Right cardiac atrium (tissue), 5 donors: ENCODE measurements at regions of chr17 and their contacts with region 1.

Region 1: DNA sequence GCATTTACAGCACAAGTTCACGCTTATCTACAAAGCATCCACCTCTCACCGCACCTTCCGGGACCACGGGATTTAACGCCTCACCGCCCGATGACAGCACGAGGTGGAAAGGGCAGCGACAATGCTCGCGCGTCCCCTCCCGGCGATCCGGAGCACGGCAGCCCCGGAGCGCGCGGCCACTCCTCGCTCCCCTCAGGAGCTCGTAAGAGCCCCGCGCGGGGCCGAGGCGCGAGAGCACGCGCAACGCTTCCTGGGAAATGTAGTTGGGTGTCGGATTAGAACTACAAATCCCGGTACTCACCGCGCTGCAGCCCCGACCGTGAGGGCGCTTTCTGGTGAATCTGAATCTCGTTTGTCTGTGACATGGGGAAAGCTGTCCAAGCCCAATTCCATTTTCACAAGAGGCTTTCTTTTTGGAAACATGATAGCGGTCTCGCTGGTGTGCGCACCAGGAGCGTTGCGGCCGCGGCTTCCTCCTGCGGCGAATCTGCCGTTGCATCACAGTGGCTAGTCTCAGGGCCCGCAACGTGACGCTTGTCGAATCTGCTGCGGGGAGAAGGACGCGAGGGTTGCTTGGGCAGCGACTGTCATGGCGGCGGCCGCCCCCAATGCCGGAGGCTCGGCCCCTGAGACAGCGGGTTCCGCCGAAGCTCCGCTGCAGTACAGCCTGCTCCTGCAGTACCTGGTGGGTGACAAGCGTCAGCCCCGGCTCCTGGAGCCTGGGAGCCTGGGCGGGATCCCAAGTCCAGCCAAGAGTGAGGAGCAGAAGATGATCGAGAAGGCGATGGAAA is at the start of gene TIMM22:
- DNase-seq: peak; percentile 94 to 97 (median 96)
- ATAC-seq: peak; percentile 97
- H3K4me3 ChIP-seq: peak within 1 kb of the TSS; percentile 97
- H3K27ac ChIP-seq: peak within 1 kb of the TSS; percentile 89
- H3K4me1 ChIP-seq: peaks cover 8% of the 10 kb centered on the region
- H3K27me3 ChIP-seq: no peaks in the 10 kb centered on the region
- total RNA-seq, gene TIMM22: 13.9 to 16.1 (median 14.4) TPM

Region 2: GRCh38 chr17:534071-534691 is 462.6 kb before region 1 on chr17:
- intact Hi-C with region 1: no loop called
- DNase-seq: peak in 2 of 3 donors; percentile 73 to 74
- ATAC-seq: peak; percentile 34 to 69
- H3K4me3 ChIP-seq: no peak overlapping the region
- H3K27ac ChIP-seq: peak overlapping the region; percentile 32
- H3K4me1 ChIP-seq: no peaks in the 10 kb centered on the region
- H3K27me3 ChIP-seq: no peaks in the 10 kb centered on the region

Region 3: DNA sequence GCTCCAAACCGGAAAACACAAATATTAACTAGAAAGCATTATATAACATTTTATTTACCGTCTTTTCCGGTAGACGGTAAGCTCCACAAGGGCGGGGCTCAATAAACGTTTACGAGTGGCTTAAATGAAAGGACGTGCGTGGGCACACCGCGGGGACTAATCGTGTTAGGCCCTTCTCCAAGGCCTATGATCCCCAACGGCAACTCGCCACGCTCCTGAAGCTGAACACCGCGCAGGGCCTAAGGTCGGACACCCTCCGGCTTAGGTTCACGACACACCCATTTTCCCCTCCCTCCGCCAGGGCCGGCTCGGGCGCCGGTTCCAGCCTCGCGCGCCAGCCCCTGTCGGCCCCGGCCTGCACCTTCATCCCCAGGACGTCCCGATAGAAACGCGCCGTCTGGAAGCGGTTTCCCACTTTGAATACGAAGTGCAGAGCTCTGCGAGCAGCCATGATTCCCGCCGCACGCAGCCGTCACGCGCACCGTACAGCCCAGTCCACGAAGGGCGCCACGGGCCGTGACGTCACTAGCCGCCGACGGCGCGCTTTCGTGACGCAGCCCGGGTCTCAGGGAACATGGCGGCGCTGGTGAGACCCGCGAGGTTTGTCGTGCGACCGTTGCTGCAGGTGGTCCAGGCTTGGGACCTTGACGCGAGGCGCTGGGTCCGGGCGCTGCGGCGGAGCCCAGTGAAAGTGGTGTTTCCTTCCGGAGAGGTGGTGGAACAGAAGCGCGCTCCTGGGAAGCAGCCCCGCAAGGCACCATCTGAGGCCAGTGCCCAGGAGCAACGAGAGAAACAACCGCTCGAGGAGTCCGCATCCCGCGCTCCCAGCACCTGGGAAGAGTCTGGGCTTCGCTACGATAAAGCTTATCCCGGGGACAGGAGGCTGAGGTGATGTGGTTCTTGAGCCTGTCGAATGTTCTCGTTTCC is 214.7 kb before region 1 on chr17 and contains the starts of genes GLOD4 and MRM3:
- intact Hi-C with region 1: loop called in 1 of 4 experiments (anchors 5 kb)
- DNase-seq: peak; percentile 91 to 99 (median 97)
- ATAC-seq: peak; percentile 98
- H3K4me3 ChIP-seq: peak within 1 kb of the TSS; percentile 62
- H3K27ac ChIP-seq: peak within 1 kb of the TSS; percentile 61
- H3K4me1 ChIP-seq: peaks cover 4% of the 10 kb centered on the region
- H3K27me3 ChIP-seq: no peaks in the 10 kb centered on the region
- total RNA-seq, gene GLOD4: 32.4 to 42.9 (median 36.1) TPM
- total RNA-seq, gene MRM3: 15.6 to 19.2 (median 17.9) TPM

Region 4: GRCh38 chr17:1047177-1047878 is 50.6 kb after region 1 on chr17:
- intact Hi-C with region 1: loop called in 2 of 4 experiments (anchors 5 to 10 kb)
- DNase-seq: peak; percentile 71 to 89 (median 84)
- ATAC-seq: peak; percentile 61 to 75
- H3K4me3 ChIP-seq: no peak overlapping the region
- H3K27ac ChIP-seq: peak overlapping the region; percentile 90
- H3K4me1 ChIP-seq: no peaks in the 10 kb centered on the region
- H3K27me3 ChIP-seq: no peaks in the 10 kb centered on the region

Region 5: DNA sequence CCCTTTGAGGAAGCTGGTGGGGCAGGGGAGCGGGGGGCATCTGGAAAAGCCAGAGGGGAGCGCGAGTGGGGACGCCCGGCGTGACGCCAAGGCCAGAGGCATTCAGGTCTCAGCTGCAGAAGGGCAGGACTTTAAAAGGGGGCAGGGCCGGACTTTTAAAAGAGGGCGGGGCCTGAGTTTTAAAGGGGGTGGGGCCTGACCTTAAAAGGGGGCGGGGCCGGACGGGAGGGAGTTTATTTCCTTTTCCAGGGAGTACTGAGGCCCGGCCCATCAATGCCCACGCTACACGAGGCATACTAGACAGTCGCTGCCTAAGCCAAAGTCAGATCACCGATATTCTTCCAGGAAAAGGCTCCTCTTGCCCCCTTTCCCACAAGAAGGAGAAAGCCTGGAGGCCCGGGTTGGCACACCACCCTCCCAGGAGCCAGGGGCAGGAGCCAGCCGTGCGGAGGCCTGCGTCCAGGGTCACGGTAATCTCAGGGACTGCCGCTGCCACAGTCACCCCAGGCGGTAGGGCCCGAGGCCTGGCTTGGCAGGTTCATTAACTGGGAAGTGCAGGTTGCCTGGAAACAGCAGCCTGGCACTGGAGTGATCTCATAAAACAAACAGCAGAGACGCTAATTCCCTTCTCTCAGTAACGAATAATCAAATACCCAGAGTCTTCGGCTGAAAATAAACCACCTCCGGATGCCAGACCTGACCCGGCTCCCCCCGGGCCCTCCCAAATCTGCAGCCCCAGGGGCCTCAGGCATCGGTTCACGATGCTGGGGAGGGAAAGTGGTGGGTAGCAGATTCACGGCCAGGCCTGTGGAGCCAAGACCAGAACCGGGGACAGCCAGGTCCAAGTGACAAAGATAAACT is 90.9 kb after region 1 on chr17:
- intact Hi-C with region 1: no loop called
- DNase-seq: peak; percentile 74 to 86 (median 82)
- ATAC-seq: peak; percentile 79 to 89
- H3K4me3 ChIP-seq: no peak overlapping the region
- H3K27ac ChIP-seq: peak overlapping the region; percentile 53
- H3K4me1 ChIP-seq: no peaks in the 10 kb centered on the region
- H3K27me3 ChIP-seq: no peaks in the 10 kb centered on the region